ENCODE measurements at regions of chr21 and their contacts with region 1.

Region 1: DNA sequence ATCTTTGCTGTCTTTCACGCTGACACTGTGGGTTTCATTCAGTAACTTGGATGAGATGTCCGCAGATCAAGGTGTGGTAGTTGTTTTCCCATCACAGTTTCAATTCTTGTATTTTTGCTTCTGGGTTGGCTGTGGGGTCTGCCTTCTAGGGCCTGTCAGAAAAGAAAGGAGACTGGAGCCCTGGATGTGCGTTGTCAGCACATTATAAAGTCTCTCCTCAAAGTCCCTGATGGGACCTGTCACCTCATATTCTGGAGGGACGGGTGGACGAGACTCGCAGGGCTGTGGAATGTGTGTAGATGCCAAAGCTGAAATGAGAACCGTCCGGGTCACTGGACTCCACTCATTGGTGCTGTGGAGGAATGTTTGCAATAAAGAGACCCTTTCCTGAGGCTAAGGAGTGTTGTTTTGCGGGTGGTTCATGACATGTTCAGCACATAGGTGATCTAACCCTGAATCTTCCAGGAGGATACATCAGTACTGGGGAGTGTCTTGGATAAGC is 11.4 kb downstream of the IGSF5 start:
- DNase-seq: no peak
- ATAC-seq: no peak
- H3K4me3 ChIP-seq: no peak overlapping the region
- H3K4me3 Mint-ChIP-seq: no peak overlapping the region
- H3K27ac ChIP-seq: no peak overlapping the region
- H3K27ac Mint-ChIP-seq: no peak overlapping the region
- H3K4me1 ChIP-seq: no peaks in the 10 kb centered on the region
- H3K4me1 Mint-ChIP-seq: no peaks in the 10 kb centered on the region
- H3K27me3 ChIP-seq: no peaks in the 10 kb centered on the region
- H3K27me3 Mint-ChIP-seq: peaks cover 3% of the 10 kb centered on the region
- CTCF ChIP-seq: no peak

Region 2: GRCh38 chr21:39776589-39776988 is 20.3 kb after region 1 on chr21:
- CTCF ChIA-PET with region 1: no interaction called
- POLR2A ChIA-PET with region 1: no interaction called
- intact Hi-C with region 1: loop called in 1 of 2 experiments (anchors 2 kb)
- DNase-seq: no peak
- ATAC-seq: no peak
- H3K4me3 ChIP-seq: no peak overlapping the region
- H3K4me3 Mint-ChIP-seq: no peak overlapping the region
- H3K27ac ChIP-seq: no peak overlapping the region
- H3K27ac Mint-ChIP-seq: no peak overlapping the region
- H3K4me1 ChIP-seq: no peaks in the 10 kb centered on the region
- H3K4me1 Mint-ChIP-seq: no peaks in the 10 kb centered on the region
- H3K27me3 ChIP-seq: no peaks in the 10 kb centered on the region
- H3K27me3 Mint-ChIP-seq: no peaks in the 10 kb centered on the region
- CTCF ChIP-seq: no peak